Endothelial cell of umbilical vein (primary cell): ENCODE measurements at regions of chr6 and their contacts with region 1.

Region 1: DNA sequence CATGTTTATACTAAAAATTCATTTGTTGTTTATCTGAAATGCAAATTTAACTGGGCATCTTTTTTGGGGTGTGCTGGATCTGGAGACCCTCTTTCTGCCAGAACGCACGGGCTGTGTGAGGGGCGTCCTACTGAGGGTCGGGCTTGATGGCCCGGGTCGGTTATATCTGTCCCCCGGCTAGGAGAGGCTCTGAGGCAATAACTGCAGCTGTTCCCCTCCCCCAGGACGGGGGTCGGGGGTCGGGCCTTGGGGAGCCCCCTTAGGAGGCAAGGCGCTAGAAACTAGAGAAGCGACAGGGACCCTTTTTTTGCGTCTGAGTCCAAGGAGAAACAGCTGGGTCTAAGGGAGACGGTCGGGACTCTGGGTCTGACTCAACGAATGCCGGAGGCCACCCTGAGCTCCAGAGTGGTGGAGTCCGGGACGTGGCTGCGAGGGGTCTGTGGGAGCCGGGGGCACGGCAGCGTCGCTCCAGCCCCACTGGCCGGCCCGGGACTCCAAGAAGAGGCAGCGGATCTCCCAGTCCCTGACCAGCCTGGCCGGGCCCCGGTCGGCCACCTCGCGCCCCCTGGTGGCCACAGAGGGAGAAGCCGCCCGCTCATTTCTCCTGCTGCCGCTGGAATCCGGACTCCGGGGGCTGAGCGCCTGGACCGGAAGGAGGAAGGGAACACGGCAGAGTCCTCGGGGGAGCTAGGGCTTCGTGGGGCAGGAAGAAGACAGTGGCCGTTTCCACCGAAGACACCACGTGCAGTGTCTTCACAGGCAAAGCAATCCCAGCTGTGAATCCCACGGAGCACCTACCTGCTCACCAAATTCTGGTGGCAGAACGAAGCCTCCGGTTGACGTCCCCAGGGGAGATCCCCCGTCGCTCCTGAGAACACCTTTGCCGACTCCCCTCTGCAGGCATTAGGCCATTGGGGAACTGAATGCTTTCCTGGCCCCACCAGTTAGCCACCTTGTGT is 24.0 kb upstream of the SCML4 start:
- DNase-seq: peak; percentile 75
- H3K4me3 ChIP-seq: peak overlapping the region in 2 of 3 experiments; percentile 33 to 37
- H3K27ac ChIP-seq: no peak overlapping the region
- H3K4me1 ChIP-seq: peaks cover 5% of the 10 kb centered on the region
- H3K27me3 ChIP-seq: peaks cover 8 to 23% of the 10 kb centered on the region in 2 experiments
- CTCF ChIP-seq: peak; percentile 97
- POLR2A ChIP-seq: no peak

Region 2: GRCh38 chr6:107132330-107132954 is 715.7 kb before region 1 on chr6:
- CTCF ChIA-PET with region 1: interaction called, 31 read pairs
- POLR2A ChIA-PET with region 1: no interaction called
- dilution Hi-C with region 1: no loop called
- intact Hi-C with region 1: loop called (anchors 1 kb)
- DNase-seq: peak; percentile 32
- H3K4me3 ChIP-seq: no peak overlapping the region
- H3K27ac ChIP-seq: no peak overlapping the region
- H3K4me1 ChIP-seq: peaks cover 6% of the 10 kb centered on the region
- H3K27me3 ChIP-seq: no peaks in the 10 kb centered on the region
- CTCF ChIP-seq: peak; percentile 38 to 46
- POLR2A ChIP-seq: no peak

Region 3: GRCh38 chr6:107179004-107179403 is 669.1 kb before region 1 on chr6:
- CTCF ChIA-PET with region 1: interaction called, 17 read pairs
- POLR2A ChIA-PET with region 1: no interaction called
- dilution Hi-C with region 1: no loop called
- intact Hi-C with region 1: loop called (anchors 1 kb)
- DNase-seq: peak; percentile 30
- H3K4me3 ChIP-seq: no peak overlapping the region
- H3K27ac ChIP-seq: no peak overlapping the region
- H3K4me1 ChIP-seq: no peaks in the 10 kb centered on the region
- H3K27me3 ChIP-seq: no peaks in the 10 kb centered on the region
- CTCF ChIP-seq: peak; percentile 10 to 25
- POLR2A ChIP-seq: no peak

Region 4: DNA sequence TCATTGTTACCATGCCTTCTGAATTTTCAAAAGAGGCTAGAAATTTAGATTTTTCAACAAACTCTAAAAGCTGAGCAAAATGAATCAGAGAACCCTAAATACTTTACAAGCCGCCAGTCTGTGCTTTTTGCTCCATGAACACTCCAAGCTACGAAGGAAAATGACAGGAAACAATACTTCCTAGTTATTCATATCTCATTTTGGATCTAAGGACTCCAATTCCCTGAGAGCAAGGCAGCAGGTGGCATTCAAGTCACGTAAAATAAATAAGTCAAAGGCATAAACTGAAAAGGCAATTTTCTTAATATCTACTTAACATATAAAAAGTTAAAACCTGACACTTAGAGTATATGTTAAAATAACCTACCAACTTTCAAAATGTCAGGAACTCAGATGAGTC is 439.4 kb before region 1 on chr6:
- CTCF ChIA-PET with region 1: interaction called, 14 read pairs
- POLR2A ChIA-PET with region 1: no interaction called
- dilution Hi-C with region 1: no loop called
- intact Hi-C with region 1: loop called (anchors 2 kb)
- DNase-seq: peak; percentile 57
- H3K4me3 ChIP-seq: no peak overlapping the region
- H3K27ac ChIP-seq: no peak overlapping the region
- H3K4me1 ChIP-seq: peaks cover 7% of the 10 kb centered on the region
- H3K27me3 ChIP-seq: no peaks in the 10 kb centered on the region
- CTCF ChIP-seq: no peak
- POLR2A ChIP-seq: no peak

Region 5: DNA sequence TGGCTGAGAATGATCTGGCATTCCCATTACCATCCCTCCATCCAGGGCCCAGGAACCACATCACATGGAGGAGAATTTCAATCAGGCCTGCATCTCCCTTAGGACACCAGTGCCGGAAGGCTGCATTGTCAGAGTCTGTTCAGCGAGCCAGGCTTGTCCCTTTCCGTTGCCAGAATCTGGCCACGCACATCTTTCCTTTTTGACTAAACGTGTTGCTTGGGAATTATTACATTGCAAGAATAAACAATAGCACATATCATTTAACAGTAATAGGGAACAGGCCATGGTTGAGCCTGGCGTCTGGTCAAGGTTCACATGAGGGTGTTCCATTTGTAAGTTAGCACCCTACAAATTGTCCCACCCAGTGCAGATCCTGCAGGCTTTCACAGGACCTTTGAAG is 315.4 kb before region 1 on chr6:
- CTCF ChIA-PET with region 1: no interaction called
- POLR2A ChIA-PET with region 1: no interaction called
- dilution Hi-C with region 1: no loop called
- intact Hi-C with region 1: no loop called
- DNase-seq: no peak
- H3K4me3 ChIP-seq: no peak overlapping the region
- H3K27ac ChIP-seq: no peak overlapping the region
- H3K4me1 ChIP-seq: no peaks in the 10 kb centered on the region
- H3K27me3 ChIP-seq: no peaks in the 10 kb centered on the region
- CTCF ChIP-seq: no peak
- POLR2A ChIP-seq: no peak

Region 6: GRCh38 chr6:107674995-107675738 is 173.0 kb before region 1 on chr6:
- CTCF ChIA-PET with region 1: interaction called, 36 read pairs
- POLR2A ChIA-PET with region 1: no interaction called
- dilution Hi-C with region 1: no loop called
- intact Hi-C with region 1: loop called (anchors 1 kb)
- DNase-seq: peak; percentile 81
- H3K4me3 ChIP-seq: no peak overlapping the region
- H3K27ac ChIP-seq: no peak overlapping the region
- H3K4me1 ChIP-seq: peaks cover 13% of the 10 kb centered on the region
- H3K27me3 ChIP-seq: peaks cover 8 to 14% of the 10 kb centered on the region in 2 experiments
- CTCF ChIP-seq: peak; percentile 83 to 87
- POLR2A ChIP-seq: no peak

Region 7: GRCh38 chr6:107832151-107833056 is 15.7 kb before region 1 on chr6:
- CTCF ChIA-PET with region 1: interaction called, 15 read pairs
- POLR2A ChIA-PET with region 1: interaction called, 4 read pairs
- dilution Hi-C with region 1: no loop called
- intact Hi-C with region 1: no loop called
- DNase-seq: no peak
- H3K4me3 ChIP-seq: no peak overlapping the region
- H3K27ac ChIP-seq: no peak overlapping the region
- H3K4me1 ChIP-seq: no peaks in the 10 kb centered on the region
- H3K27me3 ChIP-seq: peaks cover 2 to 4% of the 10 kb centered on the region in 2 experiments
- CTCF ChIP-seq: no peak
- POLR2A ChIP-seq: no peak

Region 8: DNA sequence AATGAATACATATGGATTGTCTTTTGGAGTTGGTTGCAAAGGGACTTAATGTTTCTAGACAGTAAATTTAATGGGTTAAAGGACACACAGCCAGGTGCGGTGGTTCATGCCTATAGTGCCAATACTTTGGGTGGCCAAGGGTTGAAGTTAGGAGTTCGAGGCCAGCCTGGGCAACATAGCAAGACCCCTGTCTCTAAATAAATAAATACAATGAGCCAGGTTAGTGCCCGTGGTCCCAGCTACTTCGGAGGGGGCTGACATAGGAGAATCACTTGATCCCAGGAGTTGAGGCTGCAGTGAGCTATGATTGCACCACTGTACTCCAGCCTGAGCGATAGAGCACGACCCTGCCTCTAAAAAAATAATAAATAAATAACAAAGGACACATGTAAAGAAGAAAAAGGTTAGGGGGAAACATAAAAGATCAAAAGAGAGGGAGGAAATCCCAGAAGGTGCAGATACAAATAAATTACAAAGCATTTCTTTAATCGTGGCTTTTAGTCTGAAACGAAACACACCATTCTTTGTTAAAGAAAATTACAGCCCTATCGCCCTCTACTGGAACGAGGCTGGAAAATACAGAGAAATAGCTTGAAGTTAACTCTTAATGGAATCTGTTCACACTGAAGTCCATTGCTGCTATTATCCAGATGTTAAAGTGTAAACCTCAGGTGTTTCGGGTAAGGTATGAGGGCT is 18.6 kb after region 1 on chr6:
- CTCF ChIA-PET with region 1: interaction called, 32 read pairs
- POLR2A ChIA-PET with region 1: no interaction called
- dilution Hi-C with region 1: no loop called
- intact Hi-C with region 1: loop called (anchors 1 kb)
- DNase-seq: peak; percentile 45
- H3K4me3 ChIP-seq: no peak overlapping the region
- H3K27ac ChIP-seq: no peak overlapping the region
- H3K4me1 ChIP-seq: no peaks in the 10 kb centered on the region
- H3K27me3 ChIP-seq: peaks cover 0 to 3% of the 10 kb centered on the region in 2 experiments
- CTCF ChIP-seq: peak; percentile 30 to 41
- POLR2A ChIP-seq: no peak

Region 9: GRCh38 chr6:108027594-108027993 is 179.5 kb after region 1 on chr6:
- CTCF ChIA-PET with region 1: no interaction called
- POLR2A ChIA-PET with region 1: no interaction called
- dilution Hi-C with region 1: no loop called
- intact Hi-C with region 1: no loop called
- DNase-seq: no peak
- H3K4me3 ChIP-seq: no peak overlapping the region
- H3K27ac ChIP-seq: no peak overlapping the region
- H3K4me1 ChIP-seq: no peaks in the 10 kb centered on the region
- H3K27me3 ChIP-seq: peaks cover 0 to 2% of the 10 kb centered on the region in 2 experiments
- CTCF ChIP-seq: no peak
- POLR2A ChIP-seq: no peak